SK-N-SH (cell line): ENCODE measurements at regions of chr1 and their contacts with region 1.

Region 1: GRCh38 chr1:202501281-202501680 is 152.8 kb downstream of the PPP1R12B start:
- DNase-seq: peak; percentile 7
- H3K4me3 ChIP-seq: no peak overlapping the region
- H3K27ac ChIP-seq: no peak overlapping the region
- H3K4me1 ChIP-seq: peaks cover 8 to 16% of the 10 kb centered on the region in 2 experiments
- H3K27me3 ChIP-seq: no peaks in the 10 kb centered on the region
- CTCF ChIP-seq: peak; percentile 63
- EP300 ChIP-seq: no peak
- RAD21 ChIP-seq: peak; percentile 82

Region 2: DNA sequence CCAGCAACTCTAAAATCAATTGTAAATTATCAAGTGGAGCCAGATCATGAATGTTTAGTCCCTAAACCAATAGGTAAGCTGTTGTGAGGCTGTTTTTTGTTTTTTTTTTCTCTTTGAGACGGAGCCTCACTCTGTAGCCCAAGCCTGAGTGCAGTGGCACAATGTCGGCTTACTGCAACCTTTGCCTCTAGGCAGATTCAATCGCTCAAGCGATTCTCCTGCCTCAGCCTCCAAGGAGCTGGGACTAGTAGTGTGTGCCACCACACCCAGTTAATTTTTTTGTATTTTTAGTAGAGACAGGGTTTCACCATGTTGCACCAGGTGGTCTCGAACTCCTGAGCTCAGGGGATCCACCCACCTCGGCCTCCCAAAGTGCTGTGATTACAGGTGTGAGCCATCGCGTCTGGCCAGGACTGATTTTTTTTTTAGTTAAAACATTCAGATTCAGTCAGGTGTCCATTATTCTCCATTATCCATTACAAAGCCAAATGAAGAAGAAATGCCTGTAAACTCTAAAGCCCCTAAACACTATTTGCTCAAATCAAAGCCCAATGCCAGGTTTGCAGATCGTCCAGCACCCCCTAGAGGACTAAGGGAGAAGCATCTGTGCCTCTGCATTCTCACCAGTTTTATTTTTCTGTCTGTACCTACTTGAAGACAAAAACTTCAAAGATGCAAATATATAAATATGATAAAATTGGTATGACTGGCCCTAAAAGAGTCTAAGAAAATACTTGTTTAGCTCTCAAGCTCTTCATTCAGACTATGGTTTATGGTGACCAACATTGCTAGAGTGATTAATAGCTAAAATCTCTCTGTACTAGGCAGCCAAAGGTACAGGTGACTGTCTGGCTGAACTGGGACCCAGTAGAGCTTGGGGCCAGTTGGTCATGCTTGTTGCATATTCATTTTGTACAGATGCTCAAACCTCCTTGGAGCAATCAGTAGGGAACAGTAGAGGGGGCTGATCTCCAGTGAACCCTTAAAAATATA is 70.4 kb after region 1 on chr1:
- CTCF ChIA-PET with region 1: interaction called, 23 read pairs
- POLR2A ChIA-PET with region 1: no interaction called
- DNase-seq: no peak
- H3K4me3 ChIP-seq: no peak overlapping the region
- H3K27ac ChIP-seq: peak overlapping the region in 1 of 2 experiments; percentile 36; a peak in 1 of 4 replicates
- H3K4me1 ChIP-seq: peaks cover 46 to 56% of the 10 kb centered on the region in 2 experiments
- H3K27me3 ChIP-seq: no peaks in the 10 kb centered on the region
- CTCF ChIP-seq: peak; percentile 93
- EP300 ChIP-seq: no peak
- RAD21 ChIP-seq: peak; percentile 87

Region 3: DNA sequence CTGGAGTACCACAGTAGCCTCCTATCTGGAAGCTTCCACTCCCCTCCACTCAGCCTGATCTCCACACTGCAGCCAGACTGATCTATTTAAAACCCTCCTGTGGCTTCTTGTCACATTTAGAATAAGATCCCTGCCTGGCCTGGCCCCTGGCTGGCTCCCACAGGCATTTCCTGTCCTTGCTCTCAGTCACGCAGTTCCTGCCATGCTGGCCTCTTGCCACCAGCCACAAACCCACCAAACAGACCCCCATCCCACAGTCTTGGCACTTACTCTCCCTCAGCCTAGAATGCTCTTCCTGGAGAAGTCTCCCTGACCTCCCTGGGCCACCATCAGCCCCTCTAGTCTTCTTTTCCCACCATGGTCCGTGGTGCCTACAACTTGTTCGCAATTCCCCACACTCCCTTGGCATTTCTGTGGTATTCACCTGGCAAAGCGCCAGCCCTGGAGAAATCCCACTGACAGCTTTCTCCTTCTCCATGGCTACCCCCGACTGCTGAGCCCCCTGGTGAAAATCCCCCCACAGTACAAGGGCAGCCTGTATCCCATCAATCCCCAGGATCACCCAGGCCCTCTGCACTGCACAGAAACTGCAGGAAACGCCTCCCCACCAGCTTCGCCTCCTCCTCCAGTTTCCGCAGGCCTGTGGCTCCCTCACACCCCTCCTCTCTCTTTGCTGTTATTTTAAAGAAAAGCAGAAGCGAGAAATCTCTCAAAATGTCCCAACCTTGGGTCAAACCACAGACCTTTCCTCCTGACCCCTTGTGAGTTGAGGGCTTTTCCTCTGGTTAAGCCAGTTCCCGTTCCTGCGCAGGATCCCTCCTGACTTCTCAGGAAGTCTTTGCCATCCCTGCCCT is 114.4 kb after region 1 on chr1:
- CTCF ChIA-PET with region 1: interaction called, 11 read pairs
- POLR2A ChIA-PET with region 1: no interaction called
- DNase-seq: peak; percentile 34
- H3K4me3 ChIP-seq: no peak overlapping the region
- H3K27ac ChIP-seq: peak overlapping the region; percentile 30 to 58
- H3K4me1 ChIP-seq: peaks cover 23 to 29% of the 10 kb centered on the region in 2 experiments; a peak in 3 of 4 replicates
- H3K27me3 ChIP-seq: no peaks in the 10 kb centered on the region
- CTCF ChIP-seq: 0 out of 2 replicates have a peak, but pooled peaks have one; percentile 17
- EP300 ChIP-seq: no peak; a peak in 1 of 4 replicates
- RAD21 ChIP-seq: no peak